Head of caudate nucleus (tissue), 42 donors: ENCODE measurements at regions of chr12 and their contacts with region 1.

Region 1: DNA sequence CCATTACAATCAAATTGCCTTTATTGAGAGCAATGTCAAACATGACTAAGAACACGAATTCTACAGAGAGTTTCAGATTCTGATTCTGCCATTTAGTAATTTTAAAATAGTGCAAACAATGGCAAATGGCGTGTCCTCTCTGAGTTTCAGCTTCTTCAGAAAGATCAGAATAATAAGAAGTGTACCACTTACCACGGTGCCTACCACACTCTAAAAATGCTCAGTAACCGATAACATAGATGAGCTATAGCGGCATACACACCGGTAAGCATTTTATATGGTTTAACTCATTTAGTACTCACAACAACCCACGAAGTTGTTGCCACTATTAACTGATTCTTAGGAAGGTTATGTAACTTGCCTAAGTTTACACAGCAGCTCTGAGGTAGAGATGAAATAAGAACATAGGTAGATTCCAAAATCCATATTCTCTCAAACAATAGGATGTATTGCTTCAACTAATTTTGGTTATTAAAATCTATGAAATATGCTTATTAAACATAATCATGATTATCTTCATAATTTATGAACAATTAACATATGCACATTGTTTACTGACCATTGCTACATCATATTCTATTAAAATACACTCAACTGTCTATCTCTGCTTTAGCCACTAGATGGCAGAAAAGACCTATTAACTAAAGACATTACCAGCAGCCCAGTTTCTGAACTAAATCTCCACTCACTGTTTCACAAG is 38.3 kb downstream of the SLC6A15 start:
- DNase-seq: peak in 5 of 42 donors; percentile 11 to 60 (median 27)

Region 2: GRCh38 chr12:84772281-84772680 is 102.0 kb before region 1 on chr12:
- intact Hi-C with region 1: no loop called
- DNase-seq: no peak

Region 3: DNA sequence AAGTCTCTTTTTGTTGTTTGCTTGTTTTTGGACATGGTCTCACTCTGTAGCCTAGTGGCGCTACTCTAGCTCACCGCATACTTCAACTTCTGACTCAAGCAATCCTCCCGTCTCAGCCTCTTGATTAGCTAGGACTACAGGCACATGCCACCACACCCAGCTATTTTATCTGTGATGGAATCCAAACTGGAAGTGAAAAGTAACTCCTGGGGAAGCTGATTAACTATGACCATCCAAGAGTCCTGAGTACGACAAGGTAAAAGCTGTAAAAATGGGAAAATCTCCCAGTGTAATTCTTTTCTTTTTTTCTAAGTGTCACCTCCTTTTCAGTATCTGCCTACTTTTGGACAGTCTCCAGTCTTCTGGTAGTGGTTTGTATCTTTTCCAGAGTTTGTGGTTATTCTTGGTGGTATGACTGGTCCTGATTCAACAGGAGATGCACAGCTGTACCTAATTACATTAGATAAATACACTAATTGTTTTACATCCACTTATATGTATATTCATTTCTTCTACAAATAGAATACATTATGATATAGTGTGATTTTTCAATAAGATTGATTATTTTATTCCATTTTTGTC is 59.5 kb before region 1 on chr12:
- intact Hi-C with region 1: no loop called
- DNase-seq: no peak

Region 4: GRCh38 chr12:84912198-84913128 is 38.2 kb after region 1 on chr12 and contains the start of gene SLC6A15:
- intact Hi-C with region 1: loop called (anchors 5 kb)
- DNase-seq: peak; percentile 81 to 96 (median 91)

Region 5: DNA sequence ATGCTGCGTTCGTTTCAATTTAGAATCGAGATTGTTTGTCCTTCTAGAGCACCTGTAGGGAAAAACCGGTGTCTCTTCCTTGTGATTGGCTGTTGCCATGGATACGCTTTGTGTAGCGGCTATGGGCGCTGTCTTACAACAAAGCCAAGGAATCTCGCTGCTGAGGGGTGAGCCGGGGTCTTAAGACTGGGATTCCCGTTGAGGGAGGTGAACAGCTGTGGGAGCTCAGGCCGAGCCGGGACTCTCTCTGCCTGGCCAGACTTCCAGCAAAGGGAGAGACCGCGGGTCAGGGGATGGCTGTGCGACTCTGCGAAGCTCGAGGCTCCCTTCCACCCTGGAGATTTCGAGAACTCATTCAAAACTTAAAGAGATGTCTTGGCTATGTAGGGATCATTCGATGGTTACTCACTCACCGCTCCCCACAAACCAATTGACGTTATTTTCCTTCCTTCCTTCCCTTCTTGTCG is 162.0 kb after region 1 on chr12 and contains the starts of genes LRRIQ1 and TSPAN19:
- intact Hi-C with region 1: loop called (anchors 5 kb)
- DNase-seq: peak; percentile 36 to 90 (median 74)